Activated CD4-positive, alpha-beta T cell treated with anti-CD3 and anti-CD28 coated beads, Interleukin-2, amount 10 ng/mL, durations not matched to agents 7 days and 5 days (primary cell): ENCODE measurements at regions of chr11 and their contacts with region 1.

Region 1: GRCh38 chr11:36289226-36289852 is at the start of gene COMMD9:
- DNase-seq: peak; percentile 96
- H3K4me3 Mint-ChIP-seq: peak within 1 kb of the TSS; percentile 94
- H3K27ac Mint-ChIP-seq: peak within 1 kb of the TSS; percentile 92
- H3K4me1 Mint-ChIP-seq: peaks cover 28% of the 10 kb centered on the region
- H3K27me3 Mint-ChIP-seq: no peaks in the 10 kb centered on the region
- total RNA-seq, gene COMMD9: 47.1 to 52.8 TPM

Region 2: DNA sequence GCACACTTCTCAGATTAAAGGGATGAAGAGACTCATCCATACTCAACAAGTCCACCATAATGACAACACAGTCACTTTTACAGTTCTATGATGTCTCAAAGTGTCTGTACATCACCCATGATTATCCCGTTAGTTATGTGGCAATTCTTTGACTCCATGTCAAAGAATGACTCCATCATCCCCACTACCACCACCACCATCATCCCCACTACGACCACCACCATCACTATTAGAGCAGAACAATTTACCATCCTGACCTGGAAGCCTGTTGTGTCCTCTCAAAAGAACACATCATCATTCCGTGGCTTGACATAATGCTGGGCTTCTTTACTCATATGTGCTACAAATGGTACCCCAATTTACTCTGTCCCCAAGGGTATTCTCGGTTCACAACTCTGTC is 20.4 kb after region 1 on chr11:
- CTCF ChIA-PET with region 1: no interaction called
- POLR2A ChIA-PET with region 1: no interaction called
- DNase-seq: no peak
- H3K4me3 Mint-ChIP-seq: no peak overlapping the region
- H3K27ac Mint-ChIP-seq: no peak overlapping the region
- H3K4me1 Mint-ChIP-seq: peaks cover 6% of the 10 kb centered on the region
- H3K27me3 Mint-ChIP-seq: peaks cover 10% of the 10 kb centered on the region

Region 3: GRCh38 chr11:36478700-36479329 is 189.5 kb after region 1 on chr11:
- CTCF ChIA-PET with region 1: interaction called, 18 read pairs
- POLR2A ChIA-PET with region 1: no interaction called
- DNase-seq: peak; percentile 51
- H3K4me3 Mint-ChIP-seq: no peak overlapping the region
- H3K27ac Mint-ChIP-seq: no peak overlapping the region
- H3K4me1 Mint-ChIP-seq: peaks cover 7% of the 10 kb centered on the region
- H3K27me3 Mint-ChIP-seq: no peaks in the 10 kb centered on the region

Region 4: GRCh38 chr11:36492724-36493304 is 203.5 kb after region 1 on chr11:
- CTCF ChIA-PET with region 1: interaction called, 14 read pairs
- POLR2A ChIA-PET with region 1: no interaction called
- DNase-seq: peak; percentile 49
- H3K4me3 Mint-ChIP-seq: no peak overlapping the region
- H3K27ac Mint-ChIP-seq: no peak overlapping the region
- H3K4me1 Mint-ChIP-seq: peaks cover 23% of the 10 kb centered on the region
- H3K27me3 Mint-ChIP-seq: no peaks in the 10 kb centered on the region

Region 5: GRCh38 chr11:36509694-36510566 is 220.6 kb after region 1 on chr11 and contains the start of gene TRAF6:
- CTCF ChIA-PET with region 1: interaction called, 15 read pairs
- POLR2A ChIA-PET with region 1: no interaction called
- DNase-seq: peak; percentile 90
- H3K4me3 Mint-ChIP-seq: peak within 1 kb of the TSS; percentile 95
- H3K27ac Mint-ChIP-seq: peak within 1 kb of the TSS; percentile 94
- H3K4me1 Mint-ChIP-seq: peaks cover 31% of the 10 kb centered on the region
- H3K27me3 Mint-ChIP-seq: peaks cover 10% of the 10 kb centered on the region
- total RNA-seq, gene TRAF6: 13.5 to 15.0 TPM